ENCODE measurements at regions of chr12 and their contacts with region 1.

Region 1: GRCh38 chr12:101097829-101098580 is 112.0 kb downstream of the SLC5A8 start:
- DNase-seq: no peak
- H3K4me3 ChIP-seq: no peak overlapping the region
- H3K27ac ChIP-seq: no peak overlapping the region
- H3K4me1 ChIP-seq: no peaks in the 10 kb centered on the region
- H3K27me3 ChIP-seq: peaks cover 0 to 4% (median 0%) of the 10 kb centered on the region in 5 experiments

Region 2: GRCh38 chr12:101356794-101357193 is 258.8 kb after region 1 on chr12:
- CTCF ChIA-PET with region 1: no interaction called
- POLR2A ChIA-PET with region 1: interaction called, 10 read pairs
- DNase-seq: no peak
- H3K4me3 ChIP-seq: no peak overlapping the region
- H3K27ac ChIP-seq: no peak overlapping the region
- H3K4me1 ChIP-seq: no peaks in the 10 kb centered on the region
- H3K27me3 ChIP-seq: no peaks in the 10 kb centered on the region

Measured in common myeloid progenitor, CD34-positive (primary cell).